Left ventricle myocardium superior (tissue), 1 donor: ENCODE measurements at regions of chr3 and their contacts with region 1.

Region 1: DNA sequence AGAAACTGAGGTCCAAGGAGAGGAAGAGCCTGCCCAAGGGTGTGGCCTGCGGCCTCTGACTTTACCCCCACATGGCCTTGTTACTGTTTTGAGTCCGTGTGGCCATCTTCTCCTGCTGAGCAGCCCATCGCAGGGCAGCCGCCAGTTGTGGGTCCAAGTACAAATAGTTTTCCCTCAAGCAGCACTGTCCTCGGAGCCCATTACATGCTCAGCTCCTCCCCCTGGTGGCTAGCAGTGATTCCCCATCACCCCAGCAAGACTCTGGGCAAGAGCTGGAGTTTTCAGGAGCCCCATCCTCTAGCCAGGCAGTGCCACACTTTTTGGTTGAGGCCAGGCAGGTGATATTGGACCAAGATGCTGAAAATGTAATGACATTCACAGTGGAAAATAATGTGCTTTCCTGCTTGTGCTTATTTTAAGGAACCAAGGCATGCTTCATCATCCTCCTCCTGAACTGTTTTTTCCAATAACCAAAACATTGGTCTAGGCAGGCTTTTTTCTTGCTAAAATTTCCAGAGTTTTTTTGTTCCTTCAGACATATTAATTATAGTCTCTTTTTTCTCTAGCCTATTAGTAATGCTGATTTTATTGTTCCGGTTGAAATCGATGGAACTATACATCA is 23.2 kb upstream of the VILL start:
- DNase-seq: peak; percentile 70
- ATAC-seq: peak; percentile 78

Region 2: GRCh38 chr3:37819591-37819990 is 147.8 kb before region 1 on chr3:
- intact Hi-C with region 1: no loop called
- DNase-seq: no peak
- ATAC-seq: peak; percentile 79

Region 3: GRCh38 chr3:37855363-37855970 is 111.9 kb before region 1 on chr3:
- intact Hi-C with region 1: loop called (anchors 5 kb)
- DNase-seq: peak; percentile 94
- ATAC-seq: peak; percentile 62

Region 4: GRCh38 chr3:38084334-38085310 is 117.3 kb after region 1 on chr3:
- intact Hi-C with region 1: no loop called
- DNase-seq: no peak
- ATAC-seq: peak; percentile 41